Stomach (tissue), 19 donors: ENCODE measurements at regions of chr22 and their contacts with region 1.

Region 1: DNA sequence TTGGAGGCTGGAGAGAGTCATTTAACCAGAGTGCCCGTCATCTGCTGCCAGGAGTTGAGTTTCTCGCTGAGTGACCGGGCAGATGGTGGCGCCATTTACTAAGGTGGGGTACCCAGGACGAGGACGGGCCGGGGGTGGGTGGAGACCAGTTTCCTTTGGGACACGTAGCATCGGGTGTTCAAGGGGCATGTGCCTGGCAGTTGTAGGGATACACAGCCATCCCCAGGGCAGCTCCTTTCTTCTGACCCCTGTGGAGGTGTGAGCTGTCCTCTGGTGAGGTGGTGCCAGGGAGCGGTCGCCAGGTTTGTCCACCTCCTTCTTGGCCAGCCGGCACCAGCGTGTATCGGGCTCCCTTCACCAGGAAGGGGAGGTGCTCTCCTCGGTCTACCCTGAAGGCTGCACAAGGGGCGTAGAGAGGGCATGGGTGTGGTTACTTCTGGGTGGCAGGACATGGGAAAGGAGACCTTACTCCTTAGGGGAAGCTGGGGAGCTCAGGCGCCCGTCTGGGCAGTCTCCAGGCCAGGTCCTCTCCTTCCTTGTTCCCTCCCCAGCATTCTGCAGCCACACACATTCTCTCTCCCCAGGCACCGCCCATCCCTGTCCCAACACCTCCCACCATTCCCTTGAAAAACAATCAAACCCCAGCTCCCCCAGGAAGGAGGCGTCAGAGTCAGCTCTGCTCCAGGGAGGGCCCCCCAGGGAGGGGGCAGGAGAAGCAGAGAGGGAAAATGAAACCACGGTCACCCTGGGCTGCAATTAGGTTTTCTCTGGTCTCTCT is 10.3 kb upstream of the MB start:
- DNase-seq: peak; percentile 87 to 94
- H3K4me3 ChIP-seq: peak overlapping the region; percentile 48 to 67 (median 56)
- H3K27ac ChIP-seq: peak overlapping the region; percentile 87 to 95 (median 92)
- H3K4me1 ChIP-seq: peaks cover 11 to 33% (median 23%) of the 10 kb centered on the region in 4 donors
- H3K27me3 ChIP-seq: no peaks in the 10 kb centered on the region
- CTCF ChIP-seq: peak in 5 of 7 experiments; percentile 19 to 68 (median 47)
- EP300 ChIP-seq: no peak
- POLR2A ChIP-seq: no peak

Region 2: DNA sequence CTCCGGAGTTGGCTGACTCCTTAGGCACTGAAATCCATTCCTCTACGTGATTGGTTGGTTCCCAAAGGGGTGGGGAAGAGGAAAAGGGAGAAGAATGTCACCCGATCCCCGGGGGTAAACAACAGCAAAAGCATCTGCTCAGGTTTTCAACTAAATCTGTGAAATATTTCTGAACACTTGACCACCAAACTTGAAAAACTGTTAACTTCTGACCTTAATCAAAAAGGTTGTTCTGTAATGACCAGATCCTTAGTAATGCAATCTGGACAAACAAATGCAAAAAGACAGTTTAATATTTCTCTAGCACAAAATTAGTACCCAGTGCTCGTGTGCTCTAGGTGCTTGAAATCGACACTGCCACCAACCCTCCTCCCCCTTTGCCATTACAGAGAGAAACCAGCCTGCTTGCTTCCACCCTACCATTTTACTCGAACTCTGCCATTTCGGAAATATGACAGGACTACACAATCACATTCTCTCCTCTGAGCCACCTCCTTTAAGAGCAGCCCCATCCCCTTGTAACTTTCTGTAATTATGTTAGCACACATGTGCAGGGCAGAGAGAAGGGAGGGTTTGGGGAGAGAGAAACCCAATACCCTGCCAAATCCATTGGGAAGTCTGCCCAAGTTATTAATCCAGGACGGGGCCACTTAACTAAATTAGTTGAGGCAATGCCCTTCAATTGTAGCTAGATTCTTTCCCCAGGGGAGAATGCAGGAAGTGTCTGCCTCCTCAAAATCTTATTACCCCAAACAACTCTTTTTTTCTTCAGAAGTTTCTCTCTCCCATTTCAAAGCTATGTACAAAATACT is 287.4 kb after region 1 on chr22:
- intact Hi-C with region 1: loop called (anchors 5 kb)
- DNase-seq: peak; percentile 58 to 95
- H3K4me3 ChIP-seq: peak overlapping the region; percentile 39 to 51 (median 44)
- H3K27ac ChIP-seq: peak overlapping the region; percentile 77 to 85 (median 82)
- H3K4me1 ChIP-seq: peaks cover 19 to 93% (median 60%) of the 10 kb centered on the region in 4 donors
- H3K27me3 ChIP-seq: no peaks in the 10 kb centered on the region
- CTCF ChIP-seq: no peak
- EP300 ChIP-seq: no peak
- POLR2A ChIP-seq: no peak

Region 3: GRCh38 chr22:36123673-36124630 is 496.5 kb after region 1 on chr22:
- intact Hi-C with region 1: loop called (anchors 10 kb)
- DNase-seq: peak; percentile 96 to 99
- H3K4me3 ChIP-seq: peak overlapping the region in 3 of 4 donors; percentile 20 to 31 (median 21)
- H3K27ac ChIP-seq: peak overlapping the region; percentile 81 to 91 (median 86)
- H3K4me1 ChIP-seq: peaks cover 4 to 10% (median 6%) of the 10 kb centered on the region in 4 donors
- H3K27me3 ChIP-seq: peaks cover 0 to 6% (median 0%) of the 10 kb centered on the region in 3 donors
- CTCF ChIP-seq: peak in 6 of 7 experiments; percentile 83 to 99 (median 96)
- EP300 ChIP-seq: peak; percentile 52
- POLR2A ChIP-seq: no peak